Naive thymus-derived CD8-positive, alpha-beta T cell (primary cell): ENCODE measurements at regions of chr4 and their contacts with region 1.

Region 1: DNA sequence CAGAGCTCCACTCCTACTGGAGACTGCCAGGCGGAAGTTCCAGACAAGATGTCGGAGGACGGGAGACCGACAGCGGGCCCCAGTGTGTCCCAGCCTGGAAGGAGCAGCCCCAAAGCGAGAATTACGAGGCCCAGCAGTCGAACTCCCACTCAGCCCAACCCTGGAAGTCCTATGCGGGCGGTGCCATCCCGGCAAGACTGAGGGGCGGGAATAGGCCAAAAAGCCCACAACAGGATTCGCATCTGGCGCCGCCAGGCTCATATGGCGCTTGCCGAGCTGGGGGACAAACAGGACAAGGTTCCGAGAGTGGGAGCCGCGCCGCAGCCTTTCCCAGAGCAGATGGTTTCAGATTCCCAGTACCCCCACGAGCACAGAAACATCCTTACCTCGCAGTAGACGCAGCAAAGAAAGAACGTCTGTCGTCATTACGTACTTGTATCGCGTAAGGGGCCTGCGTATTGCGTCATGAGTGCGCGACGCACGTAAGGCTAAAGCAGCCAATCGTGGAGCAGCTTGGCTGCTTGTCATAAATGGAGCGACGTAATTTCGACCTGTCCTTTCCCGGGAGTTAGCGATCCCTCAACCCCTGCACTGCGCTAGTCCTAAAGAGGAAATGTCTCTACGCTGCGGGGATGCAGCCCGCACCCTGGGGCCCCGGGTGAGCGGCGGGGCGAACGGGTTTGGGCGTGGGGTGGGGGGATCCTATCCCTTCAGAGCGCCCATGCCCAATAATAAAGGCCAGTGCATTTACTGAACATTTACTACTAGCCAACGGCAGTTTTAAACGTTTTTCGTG is at the starts of genes LIAS and RPL9:
- DNase-seq: peak; percentile 77 to 97 (median 94)
- ATAC-seq: peak; percentile 82 to 84
- H3K4me3 Mint-ChIP-seq: peak within 1 kb of the TSS; percentile 87 to 99 (median 97)
- H3K27ac Mint-ChIP-seq: peak within 1 kb of the TSS; percentile 98 to 100 (median 100)
- H3K4me1 Mint-ChIP-seq: peaks cover 10 to 52% (median 37%) of the 10 kb centered on the region in 4 donors
- H3K27me3 Mint-ChIP-seq: peaks cover 0 to 2% (median 0%) of the 10 kb centered on the region in 5 donors
- polyA plus RNA-seq, gene LIAS: 14.6 to 20.7 (median 15.9) TPM
- polyA plus RNA-seq, gene RPL9: 2,739 to 3,314 (median 3,187) TPM

Region 2: DNA sequence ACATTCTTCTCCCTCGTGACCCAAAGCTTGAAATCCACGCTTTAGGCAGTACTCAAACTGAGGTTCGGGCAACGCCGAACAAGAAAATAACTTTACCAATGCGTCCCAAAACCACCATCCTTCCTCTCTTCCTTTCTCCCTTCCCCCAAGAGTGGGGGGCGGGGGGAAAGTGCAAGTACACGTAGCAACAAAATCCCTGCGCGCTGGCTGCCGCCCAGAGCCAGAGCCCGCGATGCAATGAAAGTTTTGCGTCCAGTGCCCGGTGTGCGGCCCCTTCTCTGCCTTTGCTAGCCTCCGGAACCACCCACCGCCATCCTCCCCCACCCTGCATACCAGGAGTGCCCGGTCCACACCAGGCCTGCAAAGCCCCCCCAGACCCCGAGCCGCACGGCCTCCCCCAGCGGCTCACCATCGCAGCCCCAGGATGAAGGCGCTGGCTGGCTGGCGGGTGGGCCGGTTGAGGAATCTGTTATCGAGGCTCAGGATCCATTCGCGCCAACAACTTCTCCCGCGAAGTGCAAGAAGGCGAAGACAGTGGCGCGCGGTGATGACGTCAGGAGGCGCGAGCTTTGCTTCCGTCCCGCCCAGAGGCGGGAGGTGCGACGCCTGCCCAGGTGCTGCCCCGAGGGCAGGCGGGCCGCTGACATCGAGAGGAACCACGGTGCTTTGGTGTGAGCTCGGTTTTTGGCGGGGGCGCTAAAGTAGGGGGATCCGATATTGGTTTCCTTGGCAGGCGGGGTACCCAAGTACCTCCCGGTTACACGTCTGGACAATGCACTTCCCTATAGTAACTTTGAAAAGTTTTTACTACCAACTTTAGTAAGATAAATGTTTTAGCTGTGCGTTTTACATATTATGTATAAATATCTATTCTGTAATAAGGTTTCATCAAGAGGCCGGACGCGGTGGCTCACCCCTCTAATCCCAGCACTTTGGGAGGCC is 92.6 kb before region 1 on chr4 and contains the start of gene RFC1:
- POLR2A ChIA-PET with region 1: interaction called, 23 read pairs
- DNase-seq: peak; percentile 88 to 97 (median 92)
- ATAC-seq: peak; percentile 96 to 98
- H3K4me3 Mint-ChIP-seq: peak within 1 kb of the TSS; percentile 91 to 94 (median 93)
- H3K27ac Mint-ChIP-seq: peak within 1 kb of the TSS; percentile 85 to 96 (median 94)
- H3K4me1 Mint-ChIP-seq: peaks cover 13 to 46% (median 40%) of the 10 kb centered on the region in 4 donors
- H3K27me3 Mint-ChIP-seq: no peaks in the 10 kb centered on the region
- polyA plus RNA-seq, gene RFC1: 26.6 to 43.2 (median 32.6) TPM

Region 3: DNA sequence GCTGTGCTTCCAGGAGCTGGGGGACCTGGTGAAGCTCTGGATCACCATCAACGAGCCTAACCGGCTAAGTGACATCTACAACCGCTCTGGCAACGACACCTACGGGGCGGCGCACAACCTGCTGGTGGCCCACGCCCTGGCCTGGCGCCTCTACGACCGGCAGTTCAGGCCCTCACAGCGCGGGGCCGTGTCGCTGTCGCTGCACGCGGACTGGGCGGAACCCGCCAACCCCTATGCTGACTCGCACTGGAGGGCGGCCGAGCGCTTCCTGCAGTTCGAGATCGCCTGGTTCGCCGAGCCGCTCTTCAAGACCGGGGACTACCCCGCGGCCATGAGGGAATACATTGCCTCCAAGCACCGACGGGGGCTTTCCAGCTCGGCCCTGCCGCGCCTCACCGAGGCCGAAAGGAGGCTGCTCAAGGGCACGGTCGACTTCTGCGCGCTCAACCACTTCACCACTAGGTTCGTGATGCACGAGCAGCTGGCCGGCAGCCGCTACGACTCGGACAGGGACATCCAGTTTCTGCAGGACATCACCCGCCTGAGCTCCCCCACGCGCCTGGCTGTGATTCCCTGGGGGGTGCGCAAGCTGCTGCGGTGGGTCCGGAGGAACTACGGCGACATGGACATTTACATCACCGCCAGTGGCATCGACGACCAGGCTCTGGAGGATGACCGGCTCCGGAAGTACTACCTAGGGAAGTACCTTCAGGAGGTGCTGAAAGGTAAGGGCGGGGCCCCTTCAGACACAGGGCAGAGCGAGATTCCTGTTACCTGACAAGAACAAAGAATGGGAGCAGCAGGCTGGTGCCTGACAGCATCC is 11.7 kb before region 1 on chr4:
- POLR2A ChIA-PET with region 1: interaction called, 26 read pairs
- DNase-seq: peak; percentile 27 to 80 (median 43)
- ATAC-seq: peak; percentile 87 to 91
- H3K4me3 Mint-ChIP-seq: peak overlapping the region; percentile 58 to 84 (median 71)
- H3K27ac Mint-ChIP-seq: peak overlapping the region in 8 of 10 donors; percentile 8 to 83 (median 71)
- H3K4me1 Mint-ChIP-seq: peaks cover 3 to 11% (median 8%) of the 10 kb centered on the region in 4 donors
- H3K27me3 Mint-ChIP-seq: no peaks in the 10 kb centered on the region

Region 4: GRCh38 chr4:39469429-39470077 is 10.8 kb after region 1 on chr4:
- POLR2A ChIA-PET with region 1: interaction called, 24 read pairs
- DNase-seq: peak in 5 of 10 donors; percentile 16 to 60 (median 45)
- ATAC-seq: peak; percentile 81 to 84
- H3K4me3 Mint-ChIP-seq: no peak overlapping the region
- H3K27ac Mint-ChIP-seq: peak overlapping the region in 5 of 10 donors; percentile 10 to 71 (median 53)
- H3K4me1 Mint-ChIP-seq: peaks cover 0 to 7% (median 2%) of the 10 kb centered on the region in 4 donors
- H3K27me3 Mint-ChIP-seq: no peaks in the 10 kb centered on the region

Region 5: DNA sequence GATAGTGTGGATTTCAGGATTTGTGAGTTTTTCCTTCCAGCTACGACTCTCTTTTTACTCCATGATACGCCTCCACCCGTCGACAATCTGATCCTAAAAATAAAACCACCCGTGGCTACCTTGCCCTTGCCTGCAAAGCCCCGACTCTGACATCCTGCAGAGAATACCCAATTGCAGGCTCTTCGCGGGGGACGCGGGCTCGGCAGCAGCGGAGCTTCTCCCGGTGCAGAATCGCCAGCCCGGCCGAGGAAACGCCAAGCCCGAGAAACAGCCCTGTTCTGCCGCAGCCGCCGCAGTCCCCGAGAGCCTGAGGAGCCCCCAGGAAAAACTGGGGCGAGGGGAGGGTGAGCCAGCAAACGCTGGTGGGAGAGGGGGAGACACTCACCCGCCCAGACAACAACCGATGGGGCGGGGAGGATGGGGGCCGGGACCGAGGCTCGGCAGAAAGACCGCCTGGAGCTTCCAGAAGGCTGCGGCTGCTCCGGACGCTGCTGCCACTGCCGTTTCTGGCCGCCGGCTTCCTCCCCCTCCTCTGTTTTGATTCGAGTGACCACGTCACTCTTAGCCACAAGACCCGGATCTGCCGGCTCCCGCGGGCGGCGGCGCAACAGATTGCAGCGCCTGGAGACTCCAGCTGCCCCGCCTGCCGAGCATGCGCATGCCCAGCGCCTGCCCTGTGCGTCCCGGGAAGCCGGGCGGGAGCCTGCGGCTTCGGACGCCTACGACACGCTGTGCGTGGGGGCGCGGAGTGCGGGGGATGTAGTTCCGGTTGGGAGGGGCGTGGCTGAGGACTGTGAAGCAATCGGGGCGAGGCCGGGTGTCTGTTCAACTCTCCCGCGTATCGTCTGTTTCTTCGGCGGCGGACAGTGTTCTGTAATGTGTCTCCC is 179.9 kb after region 1 on chr4 and contains the start of gene SMIM14:
- POLR2A ChIA-PET with region 1: interaction called, 19 read pairs
- DNase-seq: peak; percentile 81 to 93 (median 85)
- ATAC-seq: peak; percentile 77 to 83
- H3K4me3 Mint-ChIP-seq: peak within 1 kb of the TSS; percentile 82 to 97 (median 92)
- H3K27ac Mint-ChIP-seq: peak within 1 kb of the TSS; percentile 87 to 98 (median 96)
- H3K4me1 Mint-ChIP-seq: peaks cover 11 to 50% (median 44%) of the 10 kb centered on the region in 4 donors
- H3K27me3 Mint-ChIP-seq: no peaks in the 10 kb centered on the region
- polyA plus RNA-seq, gene SMIM14: 36.5 to 51.9 (median 39.6) TPM

Region 6: GRCh38 chr4:39977489-39978377 is 519.0 kb after region 1 on chr4 and contains the start of gene PDS5A:
- POLR2A ChIA-PET with region 1: interaction called, 11 read pairs
- DNase-seq: peak; percentile 83 to 93 (median 90)
- ATAC-seq: peak; percentile 85
- H3K4me3 Mint-ChIP-seq: peak within 1 kb of the TSS; percentile 85 to 94 (median 90)
- H3K27ac Mint-ChIP-seq: peak within 1 kb of the TSS; percentile 82 to 98 (median 96)
- H3K4me1 Mint-ChIP-seq: peaks cover 16 to 33% (median 30%) of the 10 kb centered on the region in 4 donors
- H3K27me3 Mint-ChIP-seq: no peaks in the 10 kb centered on the region
- polyA plus RNA-seq, gene PDS5A: 31.1 to 46.7 (median 32.4) TPM